ENCODE measurements at regions of chr2 and their contacts with region 1.

Region 1: GRCh38 chr2:64653349-64654062 is at the start of gene SERTAD2:
- DNase-seq: peak; percentile 98
- CTCF ChIP-seq: peak; percentile 34

Region 2: GRCh38 chr2:64501946-64502345 is 151.6 kb before region 1 on chr2:
- in situ Hi-C with region 1: no loop called
- DNase-seq: no peak
- CTCF ChIP-seq: no peak

Region 3: DNA sequence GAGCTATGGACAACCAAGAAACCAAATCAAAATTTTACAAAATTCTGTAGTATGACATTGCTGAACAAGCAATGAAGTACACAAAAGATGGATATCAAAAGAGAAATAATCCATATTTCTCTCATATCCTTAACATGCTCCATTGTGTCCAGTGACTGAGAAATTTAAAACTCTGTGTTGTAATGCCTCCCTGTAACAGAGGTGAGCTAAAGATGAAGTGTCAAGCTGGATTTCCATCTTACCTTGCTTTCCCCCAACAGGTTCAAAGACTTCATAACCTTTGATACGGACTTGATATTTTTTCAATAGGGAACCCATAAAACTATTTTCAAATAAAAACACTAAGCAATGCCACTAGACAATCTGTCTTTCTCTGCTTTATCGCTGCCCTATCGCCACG is 95.9 kb after region 1 on chr2:
- in situ Hi-C with region 1: loop called (anchors 10 kb)
- DNase-seq: no peak
- CTCF ChIP-seq: no peak

Region 4: GRCh38 chr2:64831134-64831976 is 177.8 kb after region 1 on chr2:
- in situ Hi-C with region 1: loop called (anchors 10 kb)
- DNase-seq: peak; percentile 80
- CTCF ChIP-seq: peak; percentile 92

Region 5: DNA sequence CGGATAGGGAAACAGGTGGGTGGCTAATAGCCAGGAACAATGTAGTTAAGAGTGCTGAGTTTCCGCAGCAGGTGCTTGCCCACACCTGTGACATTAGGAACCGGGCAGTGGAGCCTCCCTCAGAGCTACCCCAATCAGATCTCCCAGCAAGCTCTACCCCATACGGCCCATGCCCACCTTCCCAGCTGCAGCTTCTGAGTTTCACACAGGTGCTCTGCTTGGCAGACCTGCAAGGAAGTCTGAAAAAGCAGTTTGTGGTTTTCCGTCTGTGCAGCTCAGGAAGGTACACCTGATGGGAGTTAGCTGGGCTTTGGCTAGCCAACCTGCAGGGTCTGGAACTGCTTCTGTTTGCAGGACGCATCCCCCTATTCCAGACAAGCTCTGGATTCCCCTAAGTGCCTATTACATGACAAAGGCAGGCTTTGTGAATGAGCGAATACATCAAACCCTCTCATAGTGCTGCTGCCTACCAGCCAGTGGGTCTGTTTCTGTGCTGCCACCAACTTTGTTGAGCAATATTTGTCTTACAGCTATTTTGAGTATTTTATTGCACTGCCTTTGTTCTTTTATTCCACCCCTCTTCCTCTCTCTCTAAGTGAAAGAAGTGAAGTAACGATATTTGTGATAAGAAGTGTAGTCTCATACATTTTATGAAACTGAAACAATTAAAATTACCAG is 378.0 kb after region 1 on chr2:
- in situ Hi-C with region 1: no loop called
- DNase-seq: no peak
- CTCF ChIP-seq: no peak

Measured in GM13977 (cell line).